Activated CD4-positive, alpha-beta memory T cell treated with anti-CD3 and anti-CD28 coated beads for 36 hours (primary cell): ENCODE measurements at regions of chr3 and their contacts with region 1.

Region 1: GRCh38 chr3:141370065-141370533 is 1.8 kb downstream of the ZBTB38 start:
- DNase-seq: peak; percentile 68
- H3K4me3 Mint-ChIP-seq: no peak overlapping the region
- H3K27ac Mint-ChIP-seq: peak overlapping the region; percentile 40
- H3K4me1 Mint-ChIP-seq: peaks cover 58% of the 10 kb centered on the region
- H3K27me3 Mint-ChIP-seq: no peaks in the 10 kb centered on the region

Region 2: DNA sequence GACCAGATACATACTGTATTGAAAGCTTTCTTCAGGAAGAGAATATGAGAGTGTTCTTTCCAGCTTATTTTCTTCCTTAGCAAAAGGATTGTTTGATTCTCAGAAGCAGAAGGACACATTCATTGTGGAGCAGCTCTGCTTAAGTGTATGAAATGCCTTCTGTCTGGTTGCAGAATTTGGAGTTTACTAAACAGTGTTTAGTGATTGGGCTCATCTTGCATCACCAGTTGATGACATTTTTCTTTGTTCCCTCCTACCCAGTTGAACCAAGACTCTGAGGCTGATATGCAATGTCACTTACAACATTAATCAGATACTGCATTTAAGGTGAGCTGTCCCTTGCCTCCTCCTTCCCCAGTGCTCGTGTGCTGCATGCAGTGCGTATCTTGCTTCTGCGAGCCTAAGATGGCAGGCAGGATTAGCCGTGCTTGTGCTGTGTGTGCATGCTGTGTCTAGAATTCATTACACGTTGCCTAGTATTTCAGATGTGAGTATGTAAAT is 16.6 kb after region 1 on chr3:
- CTCF ChIA-PET with region 1: interaction called, 6 read pairs
- POLR2A ChIA-PET with region 1: interaction called, 10 read pairs
- intact Hi-C with region 1: no loop called
- DNase-seq: peak; percentile 31
- H3K4me3 Mint-ChIP-seq: peak overlapping the region; percentile 81
- H3K27ac Mint-ChIP-seq: peak overlapping the region; percentile 87
- H3K4me1 Mint-ChIP-seq: peaks cover 30% of the 10 kb centered on the region
- H3K27me3 Mint-ChIP-seq: peaks cover 5% of the 10 kb centered on the region